Posterior cingulate gyrus (tissue), 11 donors: ENCODE measurements at regions of chr4 and their contacts with region 1.

Region 1: GRCh38 chr4:158671915-158672806 is at the start of gene ETFDH:
- DNase-seq: peak; percentile 98 to 100 (median 99)

Region 2: DNA sequence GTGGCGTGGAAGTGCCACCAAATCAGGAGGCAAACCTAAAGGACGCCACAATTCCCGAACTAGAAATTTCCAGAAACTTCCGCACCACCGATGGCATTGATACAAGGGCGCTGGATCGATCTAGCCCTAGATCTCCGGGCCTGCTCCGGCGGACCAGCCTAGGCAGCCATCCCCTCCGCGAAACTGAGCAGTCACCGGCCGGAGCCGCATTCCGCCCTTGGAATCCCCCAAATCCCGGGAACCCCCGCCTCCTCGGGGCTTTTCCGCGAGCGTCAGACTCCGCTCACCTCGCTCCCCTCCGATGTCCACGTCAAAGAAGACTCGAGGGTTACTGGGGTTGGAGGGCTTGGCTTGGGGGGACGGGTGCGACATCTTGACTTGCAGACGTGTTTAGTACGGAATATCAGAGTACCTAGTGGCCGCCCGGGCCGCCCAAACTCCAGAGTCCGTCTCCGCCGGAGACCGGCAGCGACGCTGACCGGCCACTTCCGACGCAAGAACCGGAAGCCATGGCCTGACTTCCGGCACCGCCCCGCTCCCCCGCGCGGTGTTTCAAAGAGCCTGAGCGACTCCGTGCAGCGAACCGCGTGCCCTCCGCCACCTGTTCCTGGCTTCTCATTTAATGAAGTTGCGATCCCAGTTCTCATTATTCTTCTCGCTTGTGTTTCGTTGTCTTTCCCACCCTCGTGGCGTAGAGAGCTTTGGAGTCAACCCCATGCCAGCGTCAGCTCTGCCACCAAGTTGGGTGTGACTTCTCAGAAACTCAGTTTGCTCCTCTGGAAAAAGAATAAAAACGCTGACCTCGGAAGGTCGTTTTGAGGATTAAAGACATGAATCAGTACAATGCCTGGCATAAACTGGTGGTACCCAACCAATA is 51.0 kb after region 1 on chr4 and contains the start of gene PPID:
- intact Hi-C with region 1: loop called (anchors 2 kb)
- DNase-seq: peak; percentile 77 to 97 (median 86)